GM18951 (cell line): ENCODE measurements at regions of chr11 and their contacts with region 1.

Region 1: DNA sequence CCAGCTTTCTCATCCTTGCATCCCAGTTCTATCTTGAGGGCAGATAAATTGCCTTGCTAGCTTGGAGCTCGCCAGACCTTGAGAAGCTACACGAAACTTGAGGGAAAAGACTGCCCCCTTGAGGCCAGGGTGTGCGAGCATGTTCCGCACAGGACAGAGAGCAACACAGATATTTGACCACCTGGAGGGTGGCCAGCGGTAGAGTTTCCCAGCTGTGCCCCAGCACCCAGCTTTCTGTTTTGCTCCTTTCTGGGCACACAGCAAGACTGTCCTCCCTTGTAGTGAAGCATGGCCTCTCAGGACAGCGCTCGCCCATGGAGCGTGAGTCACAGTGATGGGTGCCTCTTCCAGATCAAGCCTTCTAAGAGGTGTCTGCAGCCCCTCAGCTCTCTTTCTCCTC is 23.5 kb downstream of the SPATA19 start:
- POLR2A ChIP-seq: no peak

Region 2: DNA sequence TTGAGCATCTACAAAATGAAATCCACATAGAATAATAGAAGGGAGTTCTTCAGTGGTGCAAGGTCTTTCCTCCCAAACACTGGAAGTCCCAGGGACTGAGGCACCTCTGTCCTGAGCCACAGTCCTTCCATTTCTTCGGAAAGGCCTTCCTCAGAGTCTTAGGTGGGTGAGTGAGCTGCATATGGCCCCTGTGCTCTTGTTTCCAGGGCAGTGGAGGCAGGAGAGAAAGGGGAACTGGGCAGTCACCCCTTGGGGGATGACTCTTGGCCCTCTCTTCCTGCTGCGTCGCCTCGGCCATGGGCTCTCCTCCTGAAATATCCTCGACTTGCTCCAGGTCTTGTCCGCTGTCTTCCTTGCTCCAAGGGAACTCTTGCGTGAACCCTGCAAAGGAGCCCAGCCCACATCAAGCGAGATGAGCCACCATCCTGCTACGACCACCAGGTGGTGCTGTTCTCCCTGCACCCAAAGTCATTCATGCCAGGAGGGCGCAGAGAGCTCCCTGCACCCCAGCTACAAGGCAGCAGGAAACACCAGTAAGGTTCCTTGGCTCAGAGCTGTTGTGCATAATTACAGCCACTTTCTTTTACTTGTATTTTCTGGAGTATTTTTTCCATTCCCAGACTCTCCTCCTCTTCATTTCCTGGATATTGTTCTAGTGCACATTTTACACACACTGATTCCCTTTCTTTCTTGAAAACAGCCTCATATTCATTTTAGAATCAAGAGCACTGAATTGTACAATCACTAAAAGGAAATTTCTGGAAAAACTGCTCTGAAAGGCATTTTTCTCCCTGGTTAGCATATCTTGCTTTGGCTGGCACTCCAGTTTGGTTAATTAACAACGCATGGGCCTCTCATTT is 687.2 kb before region 1 on chr11:
- in situ Hi-C with region 1: loop called (anchors 25 kb)
- POLR2A ChIP-seq: no peak

Region 3: DNA sequence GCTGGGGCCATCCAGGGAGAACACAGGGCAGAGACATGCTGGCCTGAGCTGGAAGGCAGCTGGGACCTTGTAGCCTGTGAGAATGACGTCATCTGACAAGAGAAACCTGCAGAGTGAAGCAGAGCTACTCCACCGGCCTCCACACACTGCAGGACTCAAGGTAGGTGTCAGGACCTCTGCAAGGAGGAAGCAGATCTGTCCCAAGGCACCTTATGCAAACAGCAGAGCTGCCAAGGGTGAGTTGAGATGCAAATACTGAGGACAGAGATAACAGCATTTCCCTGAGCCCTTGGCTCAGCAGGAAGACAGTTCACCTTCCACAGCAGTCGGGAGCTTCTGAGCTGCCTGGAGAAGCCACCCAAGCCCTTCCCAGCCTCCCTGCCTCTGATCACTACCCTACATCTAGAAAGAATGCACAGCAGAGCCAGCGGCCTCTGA is 186.9 kb after region 1 on chr11:
- in situ Hi-C with region 1: no loop called
- POLR2A ChIP-seq: no peak